Transverse colon (tissue), 4 donors: ENCODE measurements at regions of chr5 and their contacts with region 1.

Region 1: DNA sequence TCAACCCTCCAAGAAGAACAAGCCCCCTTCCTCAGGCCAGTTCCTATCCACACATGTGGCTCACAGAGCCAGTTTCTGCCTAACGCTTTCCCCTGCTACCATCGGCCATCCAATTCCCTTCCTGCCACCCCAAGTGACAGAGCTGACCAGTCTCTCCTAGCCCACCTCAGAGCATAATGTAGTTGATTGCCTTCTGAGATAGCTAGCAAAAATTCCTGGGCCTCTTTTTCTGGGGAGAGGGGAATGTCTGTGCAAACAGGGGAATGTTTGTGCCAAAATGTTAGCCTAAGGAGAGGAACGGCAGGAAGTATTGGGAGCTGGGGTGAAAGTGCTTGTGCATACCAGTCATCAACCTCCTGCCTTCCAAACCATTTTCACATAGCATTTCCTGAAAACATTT is 157.0 kb downstream of the PJA2 start:
- DNase-seq: no peak
- H3K4me3 ChIP-seq: no peak overlapping the region
- H3K27ac ChIP-seq: no peak overlapping the region
- H3K4me1 ChIP-seq: no peaks in the 10 kb centered on the region
- H3K27me3 ChIP-seq: no peaks in the 10 kb centered on the region
- CTCF ChIP-seq: no peak
- EP300 ChIP-seq: no peak
- POLR2A ChIP-seq: no peak

Region 2: GRCh38 chr5:109003928-109004327 is 248.8 kb before region 1 on chr5:
- in situ Hi-C with region 1: no loop called
- intact Hi-C with region 1: no loop called
- DNase-seq: no peak
- H3K4me3 ChIP-seq: no peak overlapping the region
- H3K27ac ChIP-seq: no peak overlapping the region
- H3K4me1 ChIP-seq: no peaks in the 10 kb centered on the region
- H3K27me3 ChIP-seq: no peaks in the 10 kb centered on the region
- CTCF ChIP-seq: no peak
- EP300 ChIP-seq: no peak
- POLR2A ChIP-seq: no peak

Region 3: GRCh38 chr5:109278141-109278540 is 25.4 kb after region 1 on chr5:
- in situ Hi-C with region 1: no loop called
- intact Hi-C with region 1: loop called (anchors 1 kb)
- DNase-seq: no peak
- H3K4me3 ChIP-seq: no peak overlapping the region
- H3K27ac ChIP-seq: no peak overlapping the region
- H3K4me1 ChIP-seq: no peaks in the 10 kb centered on the region
- H3K27me3 ChIP-seq: no peaks in the 10 kb centered on the region
- CTCF ChIP-seq: no peak
- EP300 ChIP-seq: no peak
- POLR2A ChIP-seq: no peak

Region 4: DNA sequence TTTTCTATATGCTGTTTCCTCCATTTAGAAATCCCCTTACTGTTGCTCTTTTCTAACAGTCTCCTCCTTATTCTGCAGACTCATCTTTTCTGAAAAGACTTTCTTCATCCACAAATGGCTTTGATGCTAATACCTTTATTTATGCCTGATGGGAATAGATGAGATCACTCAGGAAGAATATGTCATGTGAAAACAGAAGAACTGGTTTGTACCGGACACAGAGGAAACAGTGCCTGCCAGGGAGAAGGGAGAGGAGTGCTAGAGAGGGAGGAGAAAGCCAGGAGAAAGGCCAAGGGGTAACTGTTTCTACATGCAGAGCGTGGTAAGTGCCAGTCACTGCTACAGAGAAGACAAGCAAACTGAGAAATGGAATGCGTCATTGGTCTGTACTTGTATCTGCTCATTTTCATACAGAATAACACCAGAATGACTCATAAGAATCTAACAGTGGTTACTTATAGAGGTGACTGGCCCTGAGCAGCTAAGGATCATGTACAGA is 202.9 kb after region 1 on chr5:
- in situ Hi-C with region 1: no loop called
- intact Hi-C with region 1: no loop called
- DNase-seq: peak; percentile 11
- H3K4me3 ChIP-seq: no peak overlapping the region
- H3K27ac ChIP-seq: peak overlapping the region; percentile 23 to 51 (median 42)
- H3K4me1 ChIP-seq: peaks cover 8 to 23% (median 10%) of the 10 kb centered on the region in 4 donors
- H3K27me3 ChIP-seq: no peaks in the 10 kb centered on the region
- CTCF ChIP-seq: no peak
- EP300 ChIP-seq: no peak
- POLR2A ChIP-seq: no peak